ENCODE measurements at regions of chr4 and their contacts with region 1.

Region 1: DNA sequence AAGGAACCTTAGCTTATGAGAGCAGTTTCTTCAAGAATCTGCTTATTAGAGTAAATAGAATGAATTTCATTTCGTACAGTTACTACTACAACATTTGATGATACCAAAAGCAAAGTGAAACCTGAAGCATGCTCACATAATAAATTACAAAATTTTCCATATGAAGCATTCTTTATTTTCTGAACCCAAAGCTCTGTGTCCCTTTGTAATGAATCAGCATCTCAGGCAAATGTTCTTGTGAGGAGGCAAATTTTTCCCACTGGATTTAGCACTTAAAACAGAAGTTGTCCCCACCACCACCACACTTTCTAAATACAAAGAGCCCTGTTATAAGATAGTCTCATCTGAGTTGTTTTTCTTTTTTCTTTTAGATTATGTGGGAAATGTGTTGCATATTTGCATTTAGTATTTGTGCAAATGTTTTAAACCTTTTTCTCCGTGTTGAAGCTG is 70.7 kb upstream of the NFKB1 start:
- DNase-seq: peak; percentile 35
- H3K4me3 Mint-ChIP-seq: peak overlapping the region; percentile 81
- H3K27ac Mint-ChIP-seq: peak overlapping the region; percentile 73
- H3K4me1 Mint-ChIP-seq: peaks cover 11% of the 10 kb centered on the region
- H3K27me3 Mint-ChIP-seq: no peaks in the 10 kb centered on the region
- CTCF ChIP-seq: no peak

Region 2: DNA sequence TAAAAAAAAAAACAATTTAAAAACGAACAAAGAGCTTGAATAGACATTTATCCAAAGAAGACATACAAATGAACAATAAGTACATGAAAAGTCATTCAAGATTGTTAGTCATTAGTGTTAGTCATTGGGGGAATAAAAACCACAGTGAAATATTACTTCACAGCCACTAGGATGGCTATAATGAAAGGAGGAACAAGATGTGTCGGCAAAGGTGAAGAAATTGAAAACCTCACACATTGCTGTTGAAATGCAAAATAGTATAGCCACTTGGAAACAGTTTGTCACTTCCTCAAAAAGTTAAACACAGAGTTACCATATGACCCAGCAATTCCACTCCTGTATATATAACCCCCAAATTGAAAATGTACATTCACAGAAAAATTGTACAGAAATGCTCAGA is 40.0 kb before region 1 on chr4:
- CTCF ChIA-PET with region 1: interaction called, 3 read pairs
- POLR2A ChIA-PET with region 1: interaction called, 11 read pairs
- intact Hi-C with region 1: no loop called
- DNase-seq: peak; percentile 79
- H3K4me3 Mint-ChIP-seq: no peak overlapping the region
- H3K27ac Mint-ChIP-seq: peak overlapping the region; percentile 66
- H3K4me1 Mint-ChIP-seq: peaks cover 24% of the 10 kb centered on the region
- H3K27me3 Mint-ChIP-seq: no peaks in the 10 kb centered on the region
- CTCF ChIP-seq: peak; percentile 21

Region 3: DNA sequence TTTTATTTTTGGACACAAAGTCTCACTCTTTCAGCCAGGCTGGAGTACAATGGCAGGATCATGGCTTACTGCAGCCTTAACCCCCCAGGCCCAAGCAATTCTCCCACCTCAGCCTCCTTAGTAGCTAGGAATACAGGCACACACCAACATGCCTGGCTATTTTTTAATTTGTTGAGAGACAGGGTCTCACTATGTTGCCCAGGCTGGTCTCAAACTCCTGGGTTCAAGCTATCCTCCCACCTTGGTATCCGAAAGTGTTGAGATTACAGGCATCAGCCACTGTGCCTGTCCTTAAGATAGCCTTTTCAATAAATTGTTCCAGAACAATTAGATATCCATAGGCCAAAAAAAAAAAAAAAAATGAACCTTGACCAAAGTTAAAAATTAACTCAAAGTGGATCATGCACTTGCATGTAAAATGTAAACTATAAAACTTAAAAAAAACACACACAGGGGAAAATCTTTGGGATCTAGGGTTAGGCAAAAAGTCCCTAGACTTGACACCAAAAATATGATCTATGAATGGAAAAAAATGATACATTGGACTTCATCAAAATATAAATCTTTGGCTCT is 42.0 kb after region 1 on chr4:
- CTCF ChIA-PET with region 1: no interaction called
- POLR2A ChIA-PET with region 1: no interaction called
- intact Hi-C with region 1: no loop called
- DNase-seq: no peak
- H3K4me3 Mint-ChIP-seq: no peak overlapping the region
- H3K27ac Mint-ChIP-seq: no peak overlapping the region
- H3K4me1 Mint-ChIP-seq: peaks cover 4% of the 10 kb centered on the region
- H3K27me3 Mint-ChIP-seq: no peaks in the 10 kb centered on the region
- CTCF ChIP-seq: no peak

Measured in MCF 10A (cell line).